Mammary epithelial cell (primary cell): ENCODE measurements at regions of chr7 and their contacts with region 1.

Region 1: GRCh38 chr7:73612598-73613269 is 11.6 kb downstream of the MLXIPL start:
- DNase-seq: peak; percentile 58
- H3K4me3 ChIP-seq: no peak overlapping the region
- H3K27ac ChIP-seq: no peak overlapping the region
- H3K4me1 ChIP-seq: peaks cover 5% of the 10 kb centered on the region
- H3K27me3 ChIP-seq: no peaks in the 10 kb centered on the region
- CTCF ChIP-seq: peak in 1 of 2 donors; percentile 41

Region 2: DNA sequence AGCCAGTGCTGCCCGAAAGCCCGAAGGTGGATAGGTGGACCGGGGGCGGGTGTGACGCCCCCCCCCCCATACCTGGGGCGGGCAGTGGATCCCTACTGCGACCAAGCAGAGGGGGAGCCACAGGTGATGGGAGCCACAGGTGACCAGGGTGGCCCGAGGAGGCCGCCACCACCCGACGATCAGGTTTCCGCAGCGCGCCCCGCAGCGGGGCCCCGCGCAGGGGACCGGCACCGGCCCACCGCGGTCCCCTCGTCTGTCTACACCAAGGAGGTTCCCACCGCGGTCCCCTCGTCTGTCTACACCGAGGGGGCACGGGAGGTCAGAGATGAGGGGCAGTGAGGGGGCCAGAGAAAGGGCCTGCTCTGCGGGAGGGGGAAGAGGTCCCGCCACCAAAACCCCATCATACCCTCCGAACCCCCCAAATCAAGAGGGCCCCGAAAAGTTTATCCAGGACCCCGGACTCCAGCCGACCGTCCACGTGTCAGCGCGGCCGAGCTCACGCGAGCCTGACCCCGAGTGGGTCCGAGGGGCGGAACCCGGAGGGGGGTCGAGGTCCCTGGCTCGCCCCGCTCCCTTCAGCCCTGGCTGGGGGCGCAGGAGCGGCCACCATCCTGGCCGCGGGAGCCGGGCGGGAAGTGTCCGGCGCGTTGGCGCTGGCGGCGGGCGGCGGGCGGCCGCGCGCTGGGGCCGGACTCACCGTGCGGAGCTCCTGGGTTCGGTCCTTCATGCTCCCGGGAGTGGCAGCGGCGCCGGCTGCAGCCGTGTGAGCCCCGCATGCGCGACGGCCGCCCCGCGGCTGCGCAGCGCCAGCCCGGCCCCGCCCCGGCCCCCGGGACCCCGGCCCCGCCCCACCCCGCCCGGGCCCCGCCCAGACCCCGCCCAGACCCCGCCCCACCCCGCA is 106.4 kb after region 1 on chr7 and contains the start of gene STX1A:
- CTCF ChIA-PET with region 1: no interaction called
- dilution Hi-C with region 1: no loop called
- in situ Hi-C with region 1: loop called in 1 of 2 experiments (anchors 10 kb)
- intact Hi-C with region 1: no loop called
- DNase-seq: peak; percentile 58
- H3K4me3 ChIP-seq: peak within 1 kb of the TSS; percentile 84 to 99 (median 92)
- H3K27ac ChIP-seq: peak within 1 kb of the TSS; percentile 68
- H3K4me1 ChIP-seq: peaks cover 45% of the 10 kb centered on the region
- H3K27me3 ChIP-seq: no peaks in the 10 kb centered on the region
- CTCF ChIP-seq: no peak
- total RNA-seq, gene STX1A: 6.8 to 39.7 TPM